Posterior vena cava (tissue), 2 donors: ENCODE measurements at regions of chr4 and their contacts with region 1.

Region 1: GRCh38 chr4:97762115-97762512 is 381.2 kb downstream of the STPG2 start:
- DNase-seq: no peak

Region 2: DNA sequence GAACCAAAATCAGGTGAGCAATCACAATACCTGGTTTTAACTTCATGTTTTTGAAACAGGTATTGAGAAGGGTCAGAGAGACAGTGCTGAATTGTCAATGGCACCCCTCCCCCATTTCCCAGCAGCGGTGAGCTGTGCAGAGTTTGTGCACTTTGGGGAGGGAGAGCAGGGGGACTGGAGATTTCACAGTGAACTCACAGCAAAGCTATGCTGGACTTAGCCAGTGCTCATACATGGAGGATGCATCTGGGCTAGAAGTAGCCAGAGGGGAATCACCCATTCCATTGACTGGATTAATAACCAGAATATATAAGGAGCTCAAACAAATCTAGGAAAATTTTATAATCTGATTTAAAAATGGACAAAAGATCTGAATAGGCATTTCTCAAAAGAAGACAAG is 231.4 kb before region 1 on chr4:
- intact Hi-C with region 1: no loop called
- DNase-seq: no peak

Region 3: DNA sequence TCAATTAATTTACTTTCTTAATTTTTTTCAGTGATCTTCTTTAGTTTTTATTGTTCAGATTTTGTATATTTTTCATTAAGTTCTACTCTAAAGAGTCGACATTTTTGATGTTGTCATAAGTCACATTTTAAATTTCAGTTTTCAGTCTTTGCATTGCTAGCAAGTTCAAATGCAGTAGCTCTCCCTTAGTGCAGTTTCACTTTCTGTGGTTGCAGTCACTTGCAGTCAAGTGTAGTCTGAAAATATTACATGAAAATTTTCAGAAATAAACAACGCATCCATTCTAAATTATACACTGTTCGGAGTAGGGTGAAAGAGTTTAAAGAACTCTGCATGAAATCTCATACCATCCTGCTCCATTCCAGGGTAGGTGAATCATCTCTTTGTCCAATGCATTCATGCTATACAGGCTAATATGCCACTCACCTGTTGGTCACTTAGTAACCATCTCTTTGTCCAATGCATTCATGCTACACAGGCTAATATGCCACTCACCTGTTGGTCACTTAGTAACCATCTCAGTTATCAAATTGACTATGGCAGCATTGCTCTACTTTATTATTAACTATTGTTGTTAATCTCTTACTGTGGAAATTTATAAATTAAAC is 24.3 kb after region 1 on chr4:
- intact Hi-C with region 1: no loop called
- DNase-seq: no peak

Region 4: GRCh38 chr4:97828646-97829045 is 66.5 kb after region 1 on chr4:
- intact Hi-C with region 1: no loop called
- DNase-seq: no peak

Region 5: GRCh38 chr4:98358630-98359248 is 596.6 kb after region 1 on chr4:
- intact Hi-C with region 1: loop called in 1 of 2 experiments (anchors 5 kb)
- DNase-seq: no peak